Common myeloid progenitor, CD34-positive (primary cell): ENCODE measurements at regions of chr19 and their contacts with region 1.

Region 1: DNA sequence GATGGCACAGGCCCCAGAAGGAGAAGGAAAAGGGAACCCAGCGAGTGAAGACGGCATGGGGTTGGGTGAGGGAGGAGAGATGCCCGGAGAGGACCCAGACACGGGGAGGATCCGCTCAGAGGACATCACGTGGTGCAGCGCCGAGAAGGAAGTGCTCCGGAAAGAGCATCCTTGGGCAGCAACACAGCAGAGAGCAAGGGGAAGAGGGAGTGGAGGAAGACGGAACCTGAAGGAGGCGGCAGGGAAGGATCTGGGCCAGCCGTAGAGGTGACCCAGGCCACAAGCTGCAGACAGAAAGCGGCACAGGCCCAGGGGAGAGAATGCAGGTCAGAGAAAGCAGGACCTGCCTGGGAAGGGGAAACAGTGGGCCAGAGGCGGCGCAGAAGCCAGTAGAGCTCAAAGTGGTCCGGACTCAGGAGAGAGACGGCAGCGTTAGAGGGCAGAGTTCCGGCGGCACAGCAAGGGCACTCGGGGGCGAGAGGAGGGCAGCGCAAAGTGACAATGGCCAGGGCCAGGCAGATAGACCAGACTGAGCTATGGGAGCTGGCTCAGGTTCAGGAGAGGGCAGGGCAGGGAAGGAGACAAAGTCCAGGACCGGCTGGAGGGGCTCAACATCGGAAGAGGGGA is 1.1 kb downstream of the PPP1R12C start:
- DNase-seq: peak; percentile 28 to 57 (median 48)
- H3K4me3 ChIP-seq: peak overlapping the region; percentile 67 to 97 (median 88)
- H3K27ac ChIP-seq: peak overlapping the region in 1 of 2 experiments; percentile 74
- H3K4me1 ChIP-seq: peaks cover 5 to 40% (median 30%) of the 10 kb centered on the region in 4 experiments
- H3K27me3 ChIP-seq: no peaks in the 10 kb centered on the region

Region 2: GRCh38 chr19:55005684-55006488 is 110.5 kb before region 1 on chr19:
- CTCF ChIA-PET with region 1: no interaction called
- POLR2A ChIA-PET with region 1: interaction called, 10 read pairs
- DNase-seq: peak; percentile 79 to 88 (median 79)
- H3K4me3 ChIP-seq: peak overlapping the region in 6 of 7 experiments; percentile 4 to 64 (median 59)
- H3K27ac ChIP-seq: peak overlapping the region in 1 of 2 experiments; percentile 58
- H3K4me1 ChIP-seq: peaks cover 0 to 13% (median 6%) of the 10 kb centered on the region in 4 experiments
- H3K27me3 ChIP-seq: no peaks in the 10 kb centered on the region

Region 3: DNA sequence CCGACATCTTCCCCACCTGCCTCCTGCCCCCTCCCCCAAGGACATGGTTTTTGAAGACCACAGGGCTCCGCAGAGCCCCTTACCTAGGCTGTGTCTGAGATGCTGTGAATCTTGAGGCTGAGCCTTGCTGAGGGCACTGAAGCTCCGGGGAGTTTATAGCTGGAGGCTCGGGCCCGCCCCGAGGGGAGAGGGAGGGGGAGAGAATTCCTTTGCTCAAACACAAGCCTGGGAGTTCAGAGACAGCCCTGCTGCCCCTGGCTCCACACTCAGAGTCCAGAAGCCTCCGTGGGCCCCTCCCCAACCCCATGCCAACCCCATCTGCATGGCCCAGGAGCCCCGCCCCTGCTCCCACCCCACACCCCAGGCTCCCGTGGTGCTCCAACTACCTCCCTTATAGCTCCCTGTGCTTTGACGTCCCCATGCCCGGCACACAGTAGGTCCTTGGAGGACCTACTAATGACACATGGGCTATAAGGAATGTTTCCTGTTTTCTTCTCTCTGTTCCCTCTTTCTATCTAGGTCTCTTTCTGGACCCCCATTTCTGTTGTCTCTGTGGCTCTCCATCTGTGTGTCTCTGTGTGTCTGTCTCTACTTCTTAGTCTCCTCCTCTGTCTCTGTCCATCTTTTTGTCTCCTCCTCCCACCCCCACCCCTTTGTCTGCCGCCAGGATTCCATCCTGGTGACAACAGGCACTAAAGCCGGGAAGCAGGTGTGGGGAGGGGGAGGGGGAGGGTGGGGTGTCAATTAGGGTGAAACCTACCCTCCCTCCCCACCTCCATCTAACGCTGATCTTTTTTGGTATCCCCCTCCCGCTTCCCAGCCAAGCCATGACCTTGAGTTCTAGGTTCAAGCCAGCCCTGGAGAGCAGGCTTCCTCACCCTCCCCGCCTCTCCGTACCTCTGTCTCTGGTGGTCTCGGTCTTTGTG is 33.0 kb after region 1 on chr19 and contains the start of gene TNNT1:
- CTCF ChIA-PET with region 1: no interaction called
- POLR2A ChIA-PET with region 1: no interaction called
- DNase-seq: no peak
- H3K4me3 ChIP-seq: no peak within 1 kb of the TSS
- H3K27ac ChIP-seq: no peak within 1 kb of the TSS
- H3K4me1 ChIP-seq: peaks cover 0 to 14% (median 12%) of the 10 kb centered on the region in 4 experiments
- H3K27me3 ChIP-seq: peaks cover 0 to 58% (median 2%) of the 10 kb centered on the region in 5 experiments